ENCODE measurements at regions of chr2 and their contacts with region 1.

Region 1: DNA sequence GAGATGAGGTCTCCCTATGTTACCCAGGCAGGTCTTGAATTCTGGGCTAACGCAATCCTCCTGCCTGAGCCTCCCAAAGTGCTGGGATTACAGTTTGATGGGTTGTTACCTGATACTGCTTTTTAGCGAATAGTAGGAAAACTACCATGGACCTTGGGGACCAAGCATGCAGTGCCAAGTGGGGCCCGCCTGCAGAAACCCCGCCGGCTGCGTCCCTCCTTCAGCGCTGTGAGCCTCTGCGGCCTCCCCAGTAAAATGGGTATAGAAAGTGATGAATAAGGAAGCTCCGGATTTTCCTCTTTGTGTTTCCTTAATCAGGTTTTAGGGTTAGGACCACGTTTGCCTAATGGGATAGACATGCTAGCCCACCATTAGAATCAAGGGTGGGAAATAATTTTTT is 30.4 kb downstream of the RAMP1 start:
- DNase-seq: no peak
- ATAC-seq: no peak
- H3K4me3 Mint-ChIP-seq: no peak overlapping the region
- H3K27ac Mint-ChIP-seq: peak overlapping the region; percentile 76
- H3K4me1 Mint-ChIP-seq: peaks cover 28% of the 10 kb centered on the region
- H3K27me3 Mint-ChIP-seq: no peaks in the 10 kb centered on the region
- CTCF ChIP-seq: no peak

Region 2: DNA sequence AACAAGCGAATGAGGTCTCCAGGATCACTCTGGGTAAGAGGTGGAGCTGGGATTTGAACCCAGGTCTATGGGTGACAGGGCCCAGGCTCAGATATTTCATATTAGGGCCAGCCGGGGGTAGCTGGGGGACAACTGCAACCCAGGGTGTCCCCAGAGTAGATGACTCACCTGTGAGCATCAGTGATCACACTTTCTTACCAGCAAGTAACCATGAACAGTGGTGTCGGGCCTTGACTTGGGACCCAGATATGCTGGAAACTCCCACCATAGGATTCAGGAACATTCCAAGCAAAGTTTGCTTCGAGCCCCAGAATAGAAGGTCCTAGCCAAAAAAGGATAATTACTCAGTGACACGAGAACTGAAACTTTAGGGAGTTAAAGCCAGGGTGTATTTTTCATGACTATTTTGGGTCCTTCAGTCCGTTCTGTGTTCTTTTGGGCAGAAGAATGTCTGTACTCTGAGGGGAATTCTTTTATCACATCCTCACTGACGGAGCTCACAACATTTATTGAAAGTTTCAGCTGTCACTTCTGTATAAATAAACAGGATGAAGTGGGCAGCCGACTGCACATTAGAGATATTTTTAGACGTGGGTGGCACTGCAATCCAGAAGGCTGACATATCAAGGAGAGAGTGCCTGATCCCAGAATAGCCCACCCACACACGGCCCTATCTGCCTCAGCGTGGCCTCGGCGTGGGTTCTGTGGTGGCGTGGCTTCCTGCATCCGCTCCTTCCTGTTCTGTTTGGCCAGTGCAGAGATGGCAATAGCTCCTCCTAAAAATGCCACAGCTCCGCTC is 15.2 kb after region 1 on chr2:
- CTCF ChIA-PET with region 1: no interaction called
- POLR2A ChIA-PET with region 1: interaction called, 6 read pairs
- intact Hi-C with region 1: loop called (anchors 2 kb)
- DNase-seq: no peak
- ATAC-seq: peak; percentile 72
- H3K4me3 Mint-ChIP-seq: peak overlapping the region; percentile 55
- H3K27ac Mint-ChIP-seq: peak overlapping the region; percentile 88
- H3K4me1 Mint-ChIP-seq: peaks cover 42% of the 10 kb centered on the region
- H3K27me3 Mint-ChIP-seq: no peaks in the 10 kb centered on the region
- CTCF ChIP-seq: no peak

Region 3: GRCh38 chr2:237955640-237956401 is 66.0 kb after region 1 on chr2:
- CTCF ChIA-PET with region 1: no interaction called
- POLR2A ChIA-PET with region 1: no interaction called
- intact Hi-C with region 1: no loop called
- DNase-seq: no peak
- ATAC-seq: no peak
- H3K4me3 Mint-ChIP-seq: no peak overlapping the region
- H3K27ac Mint-ChIP-seq: no peak overlapping the region
- H3K4me1 Mint-ChIP-seq: no peaks in the 10 kb centered on the region
- H3K27me3 Mint-ChIP-seq: peaks cover 19% of the 10 kb centered on the region
- CTCF ChIP-seq: no peak

Measured in activated B cell treated with CpG ODN at 0.5 μM for 24 hours (primary cell).